Sciatic nerve (tissue), 2 donors: ENCODE measurements at regions of chr2 and their contacts with region 1.

Region 1: GRCh38 chr2:27211829-27212627 is at the starts of genes ATRAID and SLC5A6:
- DNase-seq: peak; percentile 91
- ATAC-seq: peak; percentile 98
- total RNA-seq, gene ATRAID: 92.1 TPM
- total RNA-seq, gene SLC5A6: 22.6 TPM

Region 2: DNA sequence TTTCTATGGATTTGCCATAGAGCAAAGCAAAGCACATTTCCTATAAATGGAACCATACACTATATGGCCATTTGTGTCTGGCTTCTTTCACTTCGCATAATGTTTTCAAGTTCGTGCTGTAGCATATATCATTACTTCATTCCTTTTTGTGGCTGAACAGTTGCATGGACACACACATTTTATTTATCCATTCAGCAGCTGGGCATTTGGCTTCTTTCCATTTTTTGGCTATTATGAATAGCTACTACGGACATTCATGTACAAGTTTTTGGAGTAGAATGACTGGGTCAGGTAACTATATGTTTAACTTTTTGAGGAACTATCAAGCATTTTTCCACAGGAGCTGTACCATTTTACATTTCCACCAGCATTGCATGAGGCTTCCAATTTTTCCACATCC is 876.8 kb before region 1 on chr2:
- intact Hi-C with region 1: loop called (anchors 5 kb)
- DNase-seq: no peak
- ATAC-seq: no peak